Calu3 (cell line): ENCODE measurements at regions of chr12 and their contacts with region 1.

Region 1: DNA sequence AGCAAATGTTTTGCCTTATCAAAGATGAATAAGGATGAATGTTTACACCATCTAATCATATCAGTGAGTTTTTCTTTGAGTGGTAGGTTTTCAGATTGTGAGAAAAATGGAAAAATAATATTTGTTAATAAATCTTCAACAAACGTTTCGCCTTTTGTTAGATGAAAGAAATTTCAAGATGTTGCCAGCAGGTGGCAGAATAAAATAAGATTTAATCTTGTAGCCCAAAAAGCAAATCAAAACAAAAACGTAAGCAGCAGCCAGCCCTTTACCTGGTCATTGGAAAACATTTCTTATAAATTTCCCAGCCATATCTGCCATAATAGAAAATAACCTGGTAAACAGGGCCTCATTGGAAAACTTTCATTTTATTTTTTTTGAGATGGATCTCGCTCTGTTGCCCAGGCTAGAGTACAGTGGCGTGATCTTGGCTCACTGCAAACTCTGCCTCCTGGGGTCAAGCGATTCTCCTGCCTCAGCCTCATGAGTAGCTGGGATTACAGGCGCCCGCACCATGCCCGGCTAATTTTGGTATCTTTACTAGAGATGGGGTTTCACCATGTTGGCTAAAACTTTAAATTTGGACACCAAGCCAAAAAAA is 15.4 kb upstream of the TMEM120B start:
- DNase-seq: peak; percentile 57
- H3K4me3 Mint-ChIP-seq: no peak overlapping the region
- H3K27ac Mint-ChIP-seq: no peak overlapping the region
- H3K4me1 Mint-ChIP-seq: no peaks in the 10 kb centered on the region
- H3K27me3 Mint-ChIP-seq: no peaks in the 10 kb centered on the region
- CTCF ChIP-seq: peak; percentile 37

Region 2: GRCh38 chr12:121773011-121773777 is 76.0 kb after region 1 on chr12:
- CTCF ChIA-PET with region 1: interaction called, 4 read pairs
- intact Hi-C with region 1: loop called (anchors 1 kb)
- DNase-seq: peak; percentile 89
- H3K4me3 Mint-ChIP-seq: no peak overlapping the region
- H3K27ac Mint-ChIP-seq: no peak overlapping the region
- H3K4me1 Mint-ChIP-seq: no peaks in the 10 kb centered on the region
- H3K27me3 Mint-ChIP-seq: no peaks in the 10 kb centered on the region
- CTCF ChIP-seq: peak; percentile 73